Activated CD8-positive, alpha-beta memory T cell treated with anti-CD3 and anti-CD28 coated beads, Interleukin-2, amount 10 ng/mL, durations not matched to agents 7 days and 5 days (primary cell): ENCODE measurements at regions of chr1 and their contacts with region 1.

Region 1: GRCh38 chr1:178542560-178543356 is 29.8 kb downstream of the TEX35 start:
- DNase-seq: peak; percentile 88
- ATAC-seq: peak; percentile 94
- H3K4me3 Mint-ChIP-seq: peak overlapping the region; percentile 88
- H3K27ac Mint-ChIP-seq: peak overlapping the region; percentile 85
- H3K4me1 Mint-ChIP-seq: peaks cover 4% of the 10 kb centered on the region
- H3K27me3 Mint-ChIP-seq: no peaks in the 10 kb centered on the region

Region 2: GRCh38 chr1:178465011-178465410 is 77.7 kb before region 1 on chr1:
- CTCF ChIA-PET with region 1: no interaction called
- DNase-seq: no peak
- ATAC-seq: no peak
- H3K4me3 Mint-ChIP-seq: no peak overlapping the region
- H3K27ac Mint-ChIP-seq: no peak overlapping the region
- H3K4me1 Mint-ChIP-seq: no peaks in the 10 kb centered on the region
- H3K27me3 Mint-ChIP-seq: peaks cover 5% of the 10 kb centered on the region

Region 3: GRCh38 chr1:178486100-178487069 is 56.4 kb before region 1 on chr1:
- CTCF ChIA-PET with region 1: no interaction called
- DNase-seq: no peak
- ATAC-seq: no peak
- H3K4me3 Mint-ChIP-seq: no peak overlapping the region
- H3K27ac Mint-ChIP-seq: no peak overlapping the region
- H3K4me1 Mint-ChIP-seq: no peaks in the 10 kb centered on the region
- H3K27me3 Mint-ChIP-seq: peaks cover 4% of the 10 kb centered on the region

Region 4: DNA sequence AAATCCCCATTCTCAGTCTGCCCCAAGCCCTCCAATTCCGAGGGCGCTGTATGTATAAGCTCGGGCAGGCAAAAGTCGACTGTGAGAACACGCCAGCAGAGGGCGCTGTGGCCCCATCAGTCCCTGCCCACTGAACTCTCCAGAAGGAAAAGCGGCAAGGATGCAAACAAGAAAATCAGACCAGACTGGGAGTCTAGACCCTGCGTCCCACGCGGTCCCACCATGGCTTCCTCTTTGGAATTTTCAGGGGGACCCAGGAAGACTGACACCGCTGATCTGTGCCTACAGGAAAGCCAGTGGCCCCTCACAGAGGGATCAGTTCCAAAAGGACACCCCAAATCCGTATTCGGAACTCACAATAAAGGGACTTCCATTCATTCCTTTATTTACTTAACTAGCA is 10.4 kb before region 1 on chr1:
- CTCF ChIA-PET with region 1: interaction called, 39 read pairs
- DNase-seq: peak; percentile 76
- ATAC-seq: peak; percentile 94
- H3K4me3 Mint-ChIP-seq: no peak overlapping the region
- H3K27ac Mint-ChIP-seq: no peak overlapping the region
- H3K4me1 Mint-ChIP-seq: peaks cover 2% of the 10 kb centered on the region
- H3K27me3 Mint-ChIP-seq: no peaks in the 10 kb centered on the region